ENCODE measurements at regions of chr2 and their contacts with region 1.

Region 1: DNA sequence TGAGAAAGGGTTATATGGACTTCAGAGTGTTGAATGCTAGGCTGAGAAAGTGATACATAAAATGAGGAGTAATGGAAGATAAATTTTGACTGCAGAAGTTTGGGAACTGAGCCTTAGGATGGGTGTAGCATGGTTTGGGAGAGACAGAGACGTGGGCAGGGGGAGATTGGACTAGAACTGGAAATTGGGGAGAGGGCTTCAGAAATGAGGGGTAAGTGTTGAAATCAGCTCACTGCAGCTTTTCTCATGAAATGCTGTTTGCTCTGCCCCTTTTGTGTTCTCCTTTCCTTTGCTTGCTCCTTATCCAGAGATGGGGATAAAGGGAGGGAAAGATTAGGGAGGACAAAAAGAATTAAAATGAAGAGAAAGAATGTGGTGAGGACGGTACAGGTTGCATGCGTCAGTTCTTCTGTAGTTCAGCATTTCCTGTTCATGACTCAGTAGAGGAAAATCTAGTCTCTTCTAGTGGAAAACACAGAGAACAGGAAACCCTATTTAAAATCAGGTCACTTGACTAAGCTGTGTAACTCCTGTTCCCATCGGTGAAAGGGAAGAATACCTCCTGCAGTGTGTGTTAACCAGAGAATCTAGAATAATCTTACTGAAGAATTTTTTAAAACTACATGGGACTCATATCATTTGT is 105.6 kb downstream of the CRIM1 start:
- DNase-seq: peak in 1 of 2 experiments; percentile 94
- H3K4me3 ChIP-seq: peak overlapping the region; percentile 5; the same call in 1 of the 2 replicates
- H3K27ac ChIP-seq: peak overlapping the region; percentile 79
- H3K4me1 ChIP-seq: peaks cover 37% of the 10 kb centered on the region
- H3K27me3 ChIP-seq: no peaks in the 10 kb centered on the region
- CTCF ChIP-seq: no peak

Region 2: GRCh38 chr2:36376319-36376765 is 84.8 kb before region 1 on chr2:
- CTCF ChIA-PET with region 1: interaction called, 4 read pairs
- POLR2A ChIA-PET with region 1: no interaction called
- intact Hi-C with region 1: loop called (anchors 5 kb)
- DNase-seq: peak; percentile 29 to 37
- H3K4me3 ChIP-seq: no peak overlapping the region
- H3K27ac ChIP-seq: peak overlapping the region; percentile 88
- H3K4me1 ChIP-seq: peaks cover 98% of the 10 kb centered on the region
- H3K27me3 ChIP-seq: no peaks in the 10 kb centered on the region
- CTCF ChIP-seq: no peak

Region 3: GRCh38 chr2:36486546-36487044 is 25.4 kb after region 1 on chr2:
- CTCF ChIA-PET with region 1: interaction called, 3 read pairs
- POLR2A ChIA-PET with region 1: no interaction called
- intact Hi-C with region 1: loop called (anchors 1 kb)
- DNase-seq: peak; percentile 15 to 89
- H3K4me3 ChIP-seq: no peak overlapping the region
- H3K27ac ChIP-seq: peak overlapping the region; percentile 42
- H3K4me1 ChIP-seq: peaks cover 72% of the 10 kb centered on the region
- H3K27me3 ChIP-seq: no peaks in the 10 kb centered on the region
- CTCF ChIP-seq: no peak

Region 4: DNA sequence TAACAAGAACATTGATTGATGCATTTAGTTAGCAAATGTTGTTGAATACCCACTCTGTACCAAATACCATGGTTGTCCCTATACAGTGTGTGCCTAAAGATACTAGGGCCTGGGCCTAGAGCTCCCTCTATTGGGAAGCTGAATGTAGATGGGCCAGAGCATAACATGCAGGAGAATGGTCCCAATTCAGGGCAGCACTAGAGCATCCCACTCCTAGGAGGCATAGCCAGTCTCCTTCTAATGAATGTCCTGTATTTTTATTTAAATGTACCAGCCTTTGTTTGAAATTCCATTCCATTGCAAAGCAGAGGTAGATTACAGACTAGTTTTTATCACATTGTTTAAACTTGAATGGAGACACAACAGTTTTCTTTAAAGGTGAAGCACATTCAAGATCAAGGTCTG is 46.2 kb after region 1 on chr2:
- CTCF ChIA-PET with region 1: no interaction called
- POLR2A ChIA-PET with region 1: no interaction called
- intact Hi-C with region 1: loop called (anchors 1 kb)
- DNase-seq: peak in 1 of 2 experiments; percentile 38
- H3K4me3 ChIP-seq: no peak overlapping the region
- H3K27ac ChIP-seq: no peak overlapping the region
- H3K4me1 ChIP-seq: no peaks in the 10 kb centered on the region
- H3K27me3 ChIP-seq: no peaks in the 10 kb centered on the region
- CTCF ChIP-seq: peak; percentile 87

Region 5: DNA sequence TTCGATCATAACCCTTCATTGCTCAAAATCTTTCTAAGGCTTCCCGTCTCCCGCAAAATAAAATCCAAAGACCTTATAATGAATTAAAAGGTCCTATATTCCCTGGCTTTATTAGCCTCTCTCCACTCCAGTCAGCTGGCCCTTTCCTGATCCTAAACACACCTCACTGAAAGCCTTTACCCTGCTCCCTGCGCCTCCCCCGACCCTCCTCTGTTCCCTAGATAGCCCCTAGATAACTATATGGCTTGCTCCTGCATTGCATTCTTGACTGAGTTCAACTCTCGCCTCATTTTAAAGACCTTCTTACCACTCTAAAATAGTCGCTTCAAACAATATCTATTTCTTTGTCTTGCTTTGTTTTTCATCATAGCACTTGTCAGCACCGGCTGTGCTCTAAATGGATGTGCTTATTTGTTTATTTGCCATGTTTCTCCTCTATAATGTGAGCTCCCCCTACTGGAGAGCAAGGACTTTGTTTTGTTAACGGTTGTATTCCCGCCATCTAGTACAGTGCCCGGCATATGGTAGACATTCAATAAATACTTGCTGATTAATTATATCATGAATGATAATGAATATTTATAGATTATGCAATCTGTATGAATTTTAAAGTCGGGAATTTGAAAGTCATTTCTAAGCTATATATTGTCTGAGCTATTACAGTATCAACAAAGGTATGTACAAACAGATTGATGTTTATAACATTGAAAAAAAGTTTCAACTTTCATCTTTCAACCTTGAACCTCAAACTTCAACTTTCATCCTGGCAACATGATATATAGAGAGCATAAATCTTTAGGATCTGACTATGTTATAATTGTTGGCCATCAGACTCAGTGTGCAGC is 202.9 kb after region 1 on chr2:
- CTCF ChIA-PET with region 1: interaction called, 3 read pairs
- POLR2A ChIA-PET with region 1: no interaction called
- intact Hi-C with region 1: loop called (anchors 10 kb)
- DNase-seq: peak; percentile 25 to 71
- H3K4me3 ChIP-seq: no peak overlapping the region
- H3K27ac ChIP-seq: no peak overlapping the region
- H3K4me1 ChIP-seq: peaks cover 18% of the 10 kb centered on the region
- H3K27me3 ChIP-seq: no peaks in the 10 kb centered on the region
- CTCF ChIP-seq: peak; percentile 94

Measured in PC-9 (cell line).